Naive thymus-derived CD4-positive, alpha-beta T cell (primary cell): ENCODE measurements at regions of chr17 and their contacts with region 1.

Region 1: GRCh38 chr17:35242805-35243560 is at the start of gene SLFN5:
- DNase-seq: peak; percentile 82 to 97 (median 94)
- ATAC-seq: peak; percentile 88
- H3K4me3 ChIP-seq: peak within 1 kb of the TSS; percentile 97
- H3K4me3 Mint-ChIP-seq: peak within 1 kb of the TSS; percentile 91 to 100 (median 100)
- H3K27ac ChIP-seq: peak within 1 kb of the TSS; percentile 85
- H3K27ac Mint-ChIP-seq: peak within 1 kb of the TSS; percentile 94 to 100 (median 99)
- H3K4me1 ChIP-seq: peaks cover 35 to 51% of the 10 kb centered on the region in 2 donors
- H3K4me1 Mint-ChIP-seq: peaks cover 32 to 62% (median 41%) of the 10 kb centered on the region in 7 donors
- H3K27me3 ChIP-seq: no peaks in the 10 kb centered on the region
- H3K27me3 Mint-ChIP-seq: no peaks in the 10 kb centered on the region
- total RNA-seq, gene SLFN5: 80.0 to 199 (median 133) TPM

Region 2: DNA sequence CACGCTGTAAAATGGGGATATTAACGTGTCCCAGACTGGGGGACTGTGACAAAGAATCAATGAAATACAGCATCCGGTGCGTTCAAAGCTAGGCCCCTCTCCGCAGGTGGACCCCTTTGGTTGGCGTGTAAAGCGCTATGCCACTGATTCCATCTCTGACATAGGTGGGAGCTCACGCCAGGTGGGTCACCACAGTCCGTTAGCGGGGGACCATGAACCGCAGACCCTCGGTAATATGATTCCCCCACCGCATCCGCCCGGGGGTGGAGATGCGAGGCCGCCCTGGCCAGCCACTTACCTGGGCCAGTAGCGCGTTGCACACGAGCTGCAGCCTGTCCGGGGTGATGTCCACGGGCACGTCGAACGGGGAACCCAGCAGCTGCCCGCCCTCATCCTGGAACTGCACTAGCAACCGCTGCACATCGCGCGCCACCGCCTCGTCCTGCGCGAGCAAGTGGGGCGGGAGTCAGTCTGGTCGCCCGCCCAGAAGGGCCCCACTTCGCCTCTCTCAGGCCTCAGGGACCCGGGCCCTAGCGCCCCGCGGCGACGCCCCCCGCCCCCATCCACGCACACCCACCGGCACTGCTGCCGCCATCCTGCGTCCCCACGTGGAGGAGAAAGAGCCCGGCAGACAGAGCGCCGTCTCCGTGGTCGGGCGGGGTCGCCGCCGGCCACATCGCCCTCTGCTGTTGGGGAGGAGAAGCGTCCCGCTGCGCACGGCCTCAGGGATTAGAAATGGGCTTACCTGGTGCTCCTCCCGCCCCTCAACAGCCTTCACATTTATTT is 101.1 kb before region 1 on chr17 and contains the start of gene NLE1:
- CTCF ChIA-PET with region 1: interaction called, 9 read pairs
- POLR2A ChIA-PET with region 1: interaction called, 35 read pairs
- intact Hi-C with region 1: loop called (anchors 1 kb)
- DNase-seq: peak; percentile 79 to 94 (median 89)
- ATAC-seq: peak; percentile 100
- H3K4me3 ChIP-seq: peak within 1 kb of the TSS; percentile 79
- H3K4me3 Mint-ChIP-seq: peak within 1 kb of the TSS; percentile 77 to 88 (median 86)
- H3K27ac ChIP-seq: peak within 1 kb of the TSS; percentile 81
- H3K27ac Mint-ChIP-seq: peak within 1 kb of the TSS; percentile 66 to 90 (median 87)
- H3K4me1 ChIP-seq: peaks cover 6 to 13% of the 10 kb centered on the region in 2 donors
- H3K4me1 Mint-ChIP-seq: peaks cover 7 to 30% (median 21%) of the 10 kb centered on the region in 7 donors
- H3K27me3 ChIP-seq: no peaks in the 10 kb centered on the region
- H3K27me3 Mint-ChIP-seq: no peaks in the 10 kb centered on the region
- total RNA-seq, gene NLE1: 10.0 to 29.4 (median 21.8) TPM

Region 3: DNA sequence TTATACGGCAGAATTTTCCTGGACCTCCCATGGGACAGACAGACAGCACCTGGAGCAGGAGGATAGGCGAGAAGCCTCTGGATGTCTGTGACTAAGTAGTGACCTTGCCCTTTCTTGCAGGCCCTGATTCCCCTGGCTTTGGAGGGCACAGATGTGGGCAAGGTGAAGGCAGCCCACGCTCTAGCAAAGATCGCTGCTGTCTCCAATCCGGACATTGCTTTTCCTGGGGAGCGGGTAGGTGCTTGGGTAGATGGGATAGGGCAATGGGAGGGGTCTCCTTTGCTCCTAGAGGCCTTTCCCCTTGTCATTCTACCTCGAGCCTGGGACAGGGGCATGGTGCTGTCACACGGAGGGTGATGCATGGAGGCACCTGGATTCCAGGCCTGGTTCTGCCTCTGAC is 66.1 kb before region 1 on chr17:
- CTCF ChIA-PET with region 1: interaction called, 5 read pairs
- POLR2A ChIA-PET with region 1: interaction called, 31 read pairs
- intact Hi-C with region 1: loop called in 1 of 2 experiments (anchors 1 kb)
- DNase-seq: no peak
- ATAC-seq: no peak
- H3K4me3 ChIP-seq: no peak overlapping the region
- H3K4me3 Mint-ChIP-seq: peak overlapping the region in 8 of 10 donors; percentile 47 to 85 (median 72)
- H3K27ac ChIP-seq: peak overlapping the region; percentile 42
- H3K27ac Mint-ChIP-seq: peak overlapping the region; percentile 85 to 99 (median 91)
- H3K4me1 ChIP-seq: peaks cover 28 to 40% of the 10 kb centered on the region in 2 donors
- H3K4me1 Mint-ChIP-seq: peaks cover 51 to 92% (median 75%) of the 10 kb centered on the region in 7 donors
- H3K27me3 ChIP-seq: no peaks in the 10 kb centered on the region
- H3K27me3 Mint-ChIP-seq: no peaks in the 10 kb centered on the region

Region 4: GRCh38 chr17:35227546-35227945 is 15.4 kb before region 1 on chr17:
- CTCF ChIA-PET with region 1: interaction called, 10 read pairs
- POLR2A ChIA-PET with region 1: interaction called, 314 read pairs
- intact Hi-C with region 1: loop called in 1 of 2 experiments (anchors 1 kb)
- DNase-seq: no peak
- ATAC-seq: no peak
- H3K4me3 ChIP-seq: no peak overlapping the region
- H3K4me3 Mint-ChIP-seq: no peak overlapping the region
- H3K27ac ChIP-seq: no peak overlapping the region
- H3K27ac Mint-ChIP-seq: peak overlapping the region in 4 of 9 donors; percentile 38 to 67 (median 53)
- H3K4me1 ChIP-seq: peaks cover 0 to 17% of the 10 kb centered on the region in 2 donors
- H3K4me1 Mint-ChIP-seq: peaks cover 12 to 82% (median 70%) of the 10 kb centered on the region in 7 donors
- H3K27me3 ChIP-seq: no peaks in the 10 kb centered on the region
- H3K27me3 Mint-ChIP-seq: no peaks in the 10 kb centered on the region

Region 5: DNA sequence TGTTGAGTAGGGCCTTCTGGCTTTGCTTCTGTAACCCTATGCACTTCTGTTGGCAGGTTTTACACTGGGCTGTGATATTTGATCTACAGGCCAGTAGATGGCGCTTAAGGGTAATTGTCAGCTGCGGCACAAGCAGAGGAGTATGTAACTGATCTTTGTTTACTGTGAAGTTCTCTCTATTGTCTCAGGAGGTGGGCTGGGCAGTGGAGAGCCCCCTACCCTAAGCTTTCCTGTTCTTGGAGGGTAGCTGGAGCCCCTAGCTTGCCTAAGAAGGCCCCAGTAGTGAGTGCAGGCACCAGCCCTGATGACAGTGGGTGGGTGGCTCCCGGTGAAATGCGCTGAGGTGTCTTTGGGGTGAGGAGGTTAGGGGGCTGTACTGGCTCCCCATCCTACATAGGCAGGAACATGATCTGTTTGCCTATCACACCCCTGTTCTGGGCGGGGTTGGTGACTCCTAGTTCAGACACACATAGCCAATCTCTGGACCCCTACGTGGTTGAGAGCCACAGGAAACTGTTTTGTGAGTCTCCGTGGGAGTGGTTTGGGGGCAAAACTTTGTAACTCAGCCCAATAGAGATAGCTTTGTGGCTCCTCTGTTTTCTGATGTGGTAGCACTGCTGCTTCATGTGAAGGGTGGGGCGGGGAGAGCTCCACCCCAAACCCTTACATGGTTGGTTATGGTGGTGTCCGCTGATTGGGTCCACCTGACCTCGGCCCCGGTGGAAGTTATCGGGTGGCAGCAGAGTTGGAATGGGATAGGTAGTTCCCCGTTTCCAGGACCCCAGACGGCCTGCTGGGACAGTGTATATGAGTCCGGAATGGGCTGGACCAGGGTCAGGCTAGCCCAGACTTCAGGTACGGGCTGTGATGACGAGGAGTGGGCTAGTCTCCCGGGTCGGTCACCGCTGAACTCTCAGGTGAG is 70.1 kb after region 1 on chr17:
- CTCF ChIA-PET with region 1: interaction called, 7 read pairs
- POLR2A ChIA-PET with region 1: interaction called, 71 read pairs
- intact Hi-C with region 1: loop called (anchors 1 kb)
- DNase-seq: peak; percentile 56 to 96 (median 90)
- ATAC-seq: peak; percentile 93
- H3K4me3 ChIP-seq: peak overlapping the region; percentile 70
- H3K4me3 Mint-ChIP-seq: peak overlapping the region; percentile 88 to 98 (median 96)
- H3K27ac ChIP-seq: peak overlapping the region; percentile 73
- H3K27ac Mint-ChIP-seq: peak overlapping the region; percentile 94 to 99 (median 98)
- H3K4me1 ChIP-seq: peaks cover 12 to 13% of the 10 kb centered on the region in 2 donors
- H3K4me1 Mint-ChIP-seq: peaks cover 37 to 79% (median 69%) of the 10 kb centered on the region in 7 donors
- H3K27me3 ChIP-seq: no peaks in the 10 kb centered on the region
- H3K27me3 Mint-ChIP-seq: peaks cover 0 to 5% (median 0%) of the 10 kb centered on the region in 5 donors

Region 6: DNA sequence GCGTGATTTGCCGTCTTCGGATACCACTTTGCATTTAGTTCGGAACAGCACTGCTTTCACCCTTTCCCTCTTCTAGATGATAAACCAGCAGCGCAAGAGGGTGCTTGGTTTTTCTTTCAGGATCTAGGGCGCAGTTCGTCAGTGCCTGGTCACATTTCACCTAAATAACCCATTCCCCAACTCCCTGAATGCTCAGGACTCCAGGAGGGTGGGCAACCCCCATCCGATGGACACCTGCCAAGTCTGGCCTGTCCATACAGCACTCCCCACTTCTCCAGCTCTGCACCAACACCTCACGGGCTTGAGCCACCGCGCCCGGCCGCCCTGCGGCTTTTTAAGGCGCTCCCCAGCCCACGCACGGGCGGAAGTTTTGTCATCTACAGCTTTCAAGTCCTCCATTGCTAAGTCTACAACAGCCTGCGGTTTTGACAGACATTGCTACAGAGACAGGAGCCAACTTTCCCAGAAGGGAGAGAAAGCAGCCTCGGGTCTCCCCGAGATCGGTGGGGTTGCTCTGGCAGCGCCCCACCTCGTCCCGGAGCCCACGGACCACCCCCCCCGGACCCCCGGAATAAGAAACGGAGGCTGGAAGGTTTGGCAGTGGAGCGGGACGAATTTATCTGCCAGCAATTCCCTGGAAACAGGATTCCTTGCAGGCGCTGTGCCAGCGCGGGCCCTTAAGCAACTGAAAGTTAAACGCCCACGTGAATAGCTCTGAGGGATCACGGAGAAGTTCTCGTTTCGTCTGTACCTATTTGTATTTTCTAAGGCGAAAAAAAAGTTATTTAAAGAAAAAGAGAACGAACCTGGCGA is 244.1 kb after region 1 on chr17:
- CTCF ChIA-PET with region 1: interaction called, 4 read pairs
- POLR2A ChIA-PET with region 1: interaction called, 39 read pairs
- intact Hi-C with region 1: loop called (anchors 1 kb)
- DNase-seq: peak; percentile 39 to 88 (median 77)
- ATAC-seq: peak; percentile 85
- H3K4me3 ChIP-seq: peak overlapping the region; percentile 90
- H3K4me3 Mint-ChIP-seq: peak overlapping the region; percentile 80 to 99 (median 94)
- H3K27ac ChIP-seq: peak overlapping the region; percentile 82
- H3K27ac Mint-ChIP-seq: peak overlapping the region; percentile 84 to 98 (median 97)
- H3K4me1 ChIP-seq: peaks cover 10 to 24% of the 10 kb centered on the region in 2 donors
- H3K4me1 Mint-ChIP-seq: peaks cover 23 to 67% (median 45%) of the 10 kb centered on the region in 7 donors
- H3K27me3 ChIP-seq: no peaks in the 10 kb centered on the region
- H3K27me3 Mint-ChIP-seq: peaks cover 0 to 12% (median 0%) of the 10 kb centered on the region in 5 donors

Region 7: DNA sequence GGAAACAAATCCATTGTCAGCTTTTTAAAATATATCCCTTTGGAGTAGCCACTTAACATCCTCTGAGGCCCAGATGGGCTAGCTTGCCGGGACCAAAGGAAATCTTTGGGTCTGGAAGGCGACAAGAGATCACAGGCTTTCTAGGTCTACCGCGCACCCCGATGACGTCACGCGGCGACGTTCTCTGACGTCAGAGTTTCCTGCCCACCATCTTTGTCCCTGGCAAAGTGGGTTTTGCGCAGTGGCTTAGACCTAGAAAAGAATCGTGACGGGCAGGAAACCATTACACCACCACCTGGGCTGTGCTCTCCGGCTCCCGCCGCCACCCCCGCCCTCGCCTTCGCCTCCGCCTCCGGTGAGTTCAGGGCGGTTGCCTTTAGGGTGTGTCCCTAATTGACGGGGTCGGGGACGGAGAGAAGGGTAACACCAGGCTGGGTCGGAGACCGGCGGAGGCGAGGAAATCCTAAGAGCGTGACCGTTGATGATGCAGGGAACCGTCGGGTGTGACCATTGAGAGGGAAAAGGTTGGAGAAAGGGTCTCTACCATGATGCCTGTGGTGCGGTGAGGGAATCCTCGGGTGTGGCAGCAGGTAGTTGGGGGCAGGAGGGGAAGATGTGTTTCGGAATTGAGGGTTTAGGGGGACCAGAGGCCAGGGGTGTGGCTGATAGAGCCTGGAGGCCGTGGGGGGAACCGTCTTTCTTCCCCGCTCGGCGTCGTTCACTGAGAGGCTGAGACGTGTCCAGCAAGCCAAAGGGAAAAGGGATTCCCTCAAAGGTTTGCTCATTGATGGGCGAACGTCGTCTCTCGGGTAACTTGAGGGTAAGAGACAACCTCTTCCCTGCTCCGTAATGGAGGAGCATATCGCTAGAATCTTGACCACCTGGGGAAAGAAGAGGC is 344.3 kb after region 1 on chr17 and contains the start of gene AP2B1:
- CTCF ChIA-PET with region 1: interaction called, 3 read pairs
- POLR2A ChIA-PET with region 1: interaction called, 3 read pairs
- intact Hi-C with region 1: loop called (anchors 1 to 2 kb)
- DNase-seq: peak; percentile 96 to 100 (median 98)
- ATAC-seq: peak; percentile 99
- H3K4me3 ChIP-seq: peak within 1 kb of the TSS; percentile 85
- H3K4me3 Mint-ChIP-seq: peak within 1 kb of the TSS; percentile 92 to 99 (median 97)
- H3K27ac ChIP-seq: peak within 1 kb of the TSS; percentile 91
- H3K27ac Mint-ChIP-seq: peak within 1 kb of the TSS; percentile 95 to 99 (median 99)
- H3K4me1 ChIP-seq: peaks cover 13 to 17% of the 10 kb centered on the region in 2 donors
- H3K4me1 Mint-ChIP-seq: peaks cover 28 to 45% (median 38%) of the 10 kb centered on the region in 7 donors
- H3K27me3 ChIP-seq: no peaks in the 10 kb centered on the region
- H3K27me3 Mint-ChIP-seq: peaks cover 0 to 12% (median 0%) of the 10 kb centered on the region in 5 donors
- total RNA-seq, gene AP2B1: 84.7 to 197 (median 136) TPM